CD8-positive, alpha-beta T cell (primary cell): ENCODE measurements at regions of chr2 and their contacts with region 1.

Region 1: GRCh38 chr2:134207564-134208209 is 46.2 kb upstream of the MGAT5 start:
- DNase-seq: peak; percentile 38 to 81 (median 71)
- ATAC-seq: peak; percentile 94
- H3K4me3 ChIP-seq: no peak overlapping the region
- H3K4me3 Mint-ChIP-seq: no peak overlapping the region
- H3K27ac ChIP-seq: no peak overlapping the region
- H3K27ac Mint-ChIP-seq: no peak overlapping the region
- H3K4me1 ChIP-seq: peaks cover 34% of the 10 kb centered on the region
- H3K4me1 Mint-ChIP-seq: peaks cover 3% of the 10 kb centered on the region
- H3K27me3 ChIP-seq: no peaks in the 10 kb centered on the region
- H3K27me3 Mint-ChIP-seq: no peaks in the 10 kb centered on the region
- CTCF ChIP-seq: peak; percentile 63

Region 2: GRCh38 chr2:134109725-134110124 is 98.0 kb before region 1 on chr2:
- CTCF ChIA-PET with region 1: interaction called, 10 read pairs
- POLR2A ChIA-PET with region 1: no interaction called
- intact Hi-C with region 1: no loop called
- DNase-seq: no peak
- ATAC-seq: no peak
- H3K4me3 ChIP-seq: no peak overlapping the region
- H3K4me3 Mint-ChIP-seq: no peak overlapping the region
- H3K27ac ChIP-seq: no peak overlapping the region
- H3K27ac Mint-ChIP-seq: no peak overlapping the region
- H3K4me1 ChIP-seq: peaks cover 1% of the 10 kb centered on the region
- H3K4me1 Mint-ChIP-seq: peaks cover 3% of the 10 kb centered on the region
- H3K27me3 ChIP-seq: no peaks in the 10 kb centered on the region
- H3K27me3 Mint-ChIP-seq: no peaks in the 10 kb centered on the region
- CTCF ChIP-seq: no peak

Region 3: GRCh38 chr2:134173338-134174016 is 34.2 kb before region 1 on chr2:
- CTCF ChIA-PET with region 1: interaction called, 3 read pairs
- POLR2A ChIA-PET with region 1: no interaction called
- intact Hi-C with region 1: loop called in 1 of 2 experiments (anchors 5 kb)
- DNase-seq: peak in 1 of 9 experiments; percentile 26
- ATAC-seq: no peak
- H3K4me3 ChIP-seq: no peak overlapping the region
- H3K4me3 Mint-ChIP-seq: no peak overlapping the region
- H3K27ac ChIP-seq: no peak overlapping the region
- H3K27ac Mint-ChIP-seq: peak overlapping the region; percentile 65
- H3K4me1 ChIP-seq: peaks cover 26% of the 10 kb centered on the region
- H3K4me1 Mint-ChIP-seq: peaks cover 74% of the 10 kb centered on the region
- H3K27me3 ChIP-seq: no peaks in the 10 kb centered on the region
- H3K27me3 Mint-ChIP-seq: no peaks in the 10 kb centered on the region
- CTCF ChIP-seq: no peak

Region 4: DNA sequence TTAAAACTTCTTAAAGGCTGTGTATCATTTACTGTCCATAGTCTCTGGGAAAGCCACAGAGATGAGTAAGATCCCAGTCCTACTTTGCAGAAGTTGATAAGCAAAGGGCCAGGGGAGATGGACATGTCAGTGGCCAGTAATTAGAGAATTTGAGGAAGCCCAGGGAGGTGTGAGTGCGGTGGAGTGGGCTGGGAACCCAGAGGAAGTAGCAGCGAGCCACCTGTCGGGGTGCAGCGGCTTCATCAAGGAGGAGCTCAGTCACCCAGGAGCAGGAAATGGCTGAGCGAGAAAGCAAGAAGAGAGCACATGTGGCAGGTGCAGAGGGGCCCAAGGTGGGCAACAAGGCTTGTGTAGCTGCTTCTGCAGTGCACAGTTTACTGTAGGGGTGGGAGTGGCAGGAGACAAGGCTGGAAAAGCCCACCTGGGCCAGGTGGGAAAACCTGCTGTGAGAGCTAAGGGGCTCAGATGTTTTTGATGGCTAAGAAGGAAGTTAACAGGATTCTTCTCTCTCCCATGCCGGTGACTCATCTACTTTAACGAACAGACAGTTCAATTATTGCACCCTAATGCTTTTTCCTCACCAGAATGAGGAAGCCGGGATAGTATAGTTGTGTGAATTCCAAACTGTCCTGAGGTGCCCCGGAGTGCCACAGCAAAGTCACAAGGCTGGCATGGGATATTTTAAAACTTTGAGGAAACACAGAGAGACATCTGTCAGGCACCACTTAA is 11.4 kb after region 1 on chr2:
- CTCF ChIA-PET with region 1: interaction called, 66 read pairs
- POLR2A ChIA-PET with region 1: interaction called, 7 read pairs
- intact Hi-C with region 1: no loop called
- DNase-seq: peak in 8 of 9 experiments; percentile 14 to 70 (median 56)
- ATAC-seq: peak; percentile 51
- H3K4me3 ChIP-seq: peak overlapping the region in 1 of 2 experiments; percentile 18
- H3K4me3 Mint-ChIP-seq: peak overlapping the region; percentile 72
- H3K27ac ChIP-seq: peak overlapping the region in 1 of 2 experiments; percentile 58
- H3K27ac Mint-ChIP-seq: peak overlapping the region; percentile 93
- H3K4me1 ChIP-seq: peaks cover 45% of the 10 kb centered on the region
- H3K4me1 Mint-ChIP-seq: peaks cover 68% of the 10 kb centered on the region
- H3K27me3 ChIP-seq: no peaks in the 10 kb centered on the region
- H3K27me3 Mint-ChIP-seq: no peaks in the 10 kb centered on the region
- CTCF ChIP-seq: no peak

Region 5: GRCh38 chr2:134245340-134245984 is 37.8 kb after region 1 on chr2:
- CTCF ChIA-PET with region 1: interaction called, 67 read pairs
- POLR2A ChIA-PET with region 1: no interaction called
- intact Hi-C with region 1: loop called (anchors 5 kb)
- DNase-seq: peak; percentile 56 to 86 (median 78)
- ATAC-seq: peak; percentile 59
- H3K4me3 ChIP-seq: peak overlapping the region in 1 of 2 experiments; percentile 4
- H3K4me3 Mint-ChIP-seq: peak overlapping the region; percentile 0
- H3K27ac ChIP-seq: no peak overlapping the region
- H3K27ac Mint-ChIP-seq: peak overlapping the region; percentile 49
- H3K4me1 ChIP-seq: peaks cover 58% of the 10 kb centered on the region
- H3K4me1 Mint-ChIP-seq: peaks cover 88% of the 10 kb centered on the region
- H3K27me3 ChIP-seq: no peaks in the 10 kb centered on the region
- H3K27me3 Mint-ChIP-seq: no peaks in the 10 kb centered on the region
- CTCF ChIP-seq: peak; percentile 85

Region 6: DNA sequence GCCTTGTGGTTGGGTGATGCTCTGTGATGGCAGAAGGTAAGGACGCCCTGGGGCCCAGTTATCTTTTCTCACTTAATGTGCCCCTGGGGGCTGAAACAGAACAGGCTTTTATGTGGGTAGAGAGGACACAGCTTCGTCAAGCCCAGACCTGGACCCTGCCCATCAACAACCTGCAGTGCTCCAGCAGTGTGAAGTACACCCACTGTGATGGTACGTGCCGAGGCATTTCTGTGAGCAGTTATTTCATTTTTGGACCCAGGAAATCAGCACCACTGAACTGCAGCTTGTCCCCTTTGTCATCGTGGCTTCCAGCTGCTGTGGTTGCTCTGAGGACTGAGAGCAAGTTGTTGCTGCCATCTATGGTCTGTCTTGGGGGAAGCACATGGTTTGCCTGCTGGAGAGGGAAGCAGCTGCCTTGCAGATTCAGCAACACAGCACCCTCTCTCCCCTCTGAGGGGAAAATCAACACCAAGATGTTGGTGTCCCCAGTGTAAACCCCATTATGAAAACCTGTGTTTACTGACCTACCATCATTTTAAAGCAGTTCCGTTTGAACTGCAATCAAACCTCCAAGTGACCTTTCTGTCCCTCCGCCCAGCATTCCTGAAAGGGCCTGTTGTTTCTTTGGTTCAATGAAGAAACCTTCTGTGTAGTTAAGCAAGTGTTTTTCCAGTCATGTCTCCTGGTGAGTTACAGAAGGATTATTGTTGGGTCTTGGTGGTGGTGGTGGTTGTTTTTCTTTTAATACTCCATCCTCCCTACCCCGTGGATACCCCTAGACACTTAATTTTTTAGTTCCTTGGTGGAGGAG is 204.3 kb after region 1 on chr2:
- CTCF ChIA-PET with region 1: interaction called, 37 read pairs
- POLR2A ChIA-PET with region 1: interaction called, 3 read pairs
- intact Hi-C with region 1: loop called (anchors 5 kb)
- DNase-seq: peak; percentile 41 to 83 (median 68)
- ATAC-seq: peak; percentile 95
- H3K4me3 ChIP-seq: no peak overlapping the region
- H3K4me3 Mint-ChIP-seq: no peak overlapping the region
- H3K27ac ChIP-seq: no peak overlapping the region
- H3K27ac Mint-ChIP-seq: peak overlapping the region; percentile 19
- H3K4me1 ChIP-seq: peaks cover 6% of the 10 kb centered on the region
- H3K4me1 Mint-ChIP-seq: peaks cover 48% of the 10 kb centered on the region
- H3K27me3 ChIP-seq: no peaks in the 10 kb centered on the region
- H3K27me3 Mint-ChIP-seq: no peaks in the 10 kb centered on the region
- CTCF ChIP-seq: peak; percentile 67

Region 7: DNA sequence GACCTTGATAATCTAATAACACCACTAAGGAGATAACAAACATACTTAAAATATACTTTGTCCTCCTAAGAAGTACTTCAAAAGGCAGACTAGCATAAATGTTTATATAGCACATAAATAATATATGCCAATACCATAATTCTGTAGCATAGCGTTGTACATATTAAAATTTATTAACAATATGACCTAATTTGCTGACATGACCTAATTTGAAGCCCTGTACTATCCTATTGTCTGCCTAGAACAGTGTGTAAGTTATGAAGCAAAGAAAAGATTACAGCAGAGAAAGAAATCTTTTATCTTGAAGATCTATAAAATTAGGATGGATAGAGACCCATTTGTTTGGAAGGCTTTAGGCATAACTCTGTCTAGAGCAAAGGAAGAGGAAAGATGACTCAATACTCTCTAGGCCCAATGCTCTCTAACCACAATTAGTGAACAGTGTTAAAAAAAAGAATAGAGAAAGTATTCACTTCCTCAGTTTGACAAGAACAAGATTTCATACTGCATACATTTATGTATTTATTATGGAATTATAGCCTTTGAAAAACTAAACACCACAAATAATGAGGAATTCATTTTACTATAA is 1092.1 kb after region 1 on chr2:
- CTCF ChIA-PET with region 1: no interaction called
- POLR2A ChIA-PET with region 1: no interaction called
- intact Hi-C with region 1: no loop called
- DNase-seq: no peak
- ATAC-seq: no peak
- H3K4me3 ChIP-seq: no peak overlapping the region
- H3K4me3 Mint-ChIP-seq: no peak overlapping the region
- H3K27ac ChIP-seq: no peak overlapping the region
- H3K27ac Mint-ChIP-seq: no peak overlapping the region
- H3K4me1 ChIP-seq: no peaks in the 10 kb centered on the region
- H3K4me1 Mint-ChIP-seq: no peaks in the 10 kb centered on the region
- H3K27me3 ChIP-seq: no peaks in the 10 kb centered on the region
- H3K27me3 Mint-ChIP-seq: no peaks in the 10 kb centered on the region
- CTCF ChIP-seq: no peak